ENCODE measurements at regions of chr19 and their contacts with region 1.

Region 1: GRCh38 chr19:12139885-12140547 is at the start of gene ZNF20:
- DNase-seq: peak; percentile 92 to 95 (median 94)
- ATAC-seq: peak; percentile 99
- H3K4me3 ChIP-seq: peak within 1 kb of the TSS; percentile 69
- H3K27ac ChIP-seq: peak within 1 kb of the TSS; percentile 79; the same call in 2 of the 3 replicates
- H3K4me1 ChIP-seq: peaks cover 5 to 12% of the 10 kb centered on the region in 2 experiments; a peak in 4 of 5 replicates
- H3K27me3 ChIP-seq: no peaks in the 10 kb centered on the region
- CTCF ChIP-seq: no peak
- EP300 ChIP-seq: peak; percentile 37
- POLR2A ChIP-seq: peak; percentile 65
- RAD21 ChIP-seq: no peak
- polyA plus RNA-seq, gene ZNF20: 3.3 to 3.4 TPM

Region 2: DNA sequence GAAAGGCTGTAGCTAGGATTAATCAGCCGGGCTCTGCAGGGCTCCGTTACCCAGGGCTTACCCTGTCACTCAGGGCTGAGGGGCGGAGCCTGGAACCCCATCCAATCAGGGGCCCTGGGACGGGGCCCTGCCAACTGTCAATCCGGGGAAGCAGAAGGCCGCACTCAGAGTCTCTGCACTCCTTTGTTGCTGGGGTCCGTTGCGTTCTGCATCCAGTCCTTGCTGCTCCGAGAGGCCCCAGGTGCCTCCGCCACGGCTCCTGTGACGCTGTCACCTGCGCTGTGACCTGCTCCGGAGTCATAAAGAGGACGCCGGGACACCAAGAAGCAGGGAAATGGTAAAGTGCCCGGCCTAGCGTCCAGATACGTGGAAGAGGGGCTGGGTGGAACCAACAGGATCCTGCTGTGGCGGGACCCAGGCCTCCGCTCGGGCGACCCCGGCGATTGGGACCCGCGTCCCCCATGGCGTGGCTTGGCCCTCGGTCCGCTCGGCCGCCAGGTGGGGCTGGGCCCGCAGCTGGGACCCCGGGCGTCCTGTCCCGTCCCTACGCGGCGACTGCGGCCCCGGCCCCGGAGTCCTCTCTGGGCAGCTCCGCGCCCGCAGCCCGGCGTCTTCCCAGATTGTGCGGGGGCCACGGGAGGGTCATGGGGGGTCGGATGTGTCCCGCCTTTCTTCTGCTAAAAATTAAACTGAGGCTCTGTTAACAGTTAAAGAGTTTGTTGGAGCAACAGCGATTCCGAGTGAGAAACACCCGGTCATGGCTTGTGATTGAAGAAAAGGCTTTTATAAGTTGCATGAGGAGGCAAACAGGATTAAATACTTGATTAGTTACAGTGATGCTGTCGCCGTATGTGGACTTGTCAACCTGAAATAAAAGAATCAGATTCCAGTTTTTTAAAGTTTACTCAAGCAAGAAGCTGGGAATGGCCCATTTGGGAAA is 341.4 kb before region 1 on chr19 and contains the start of gene ZNF491:
- CTCF ChIA-PET with region 1: no interaction called
- POLR2A ChIA-PET with region 1: no interaction called
- in situ Hi-C with region 1: loop called (anchors 10 kb)
- intact Hi-C with region 1: no loop called
- DNase-seq: peak; percentile 79 to 88 (median 81)
- ATAC-seq: peak; percentile 99
- H3K4me3 ChIP-seq: peak within 1 kb of the TSS; percentile 48
- H3K27ac ChIP-seq: no peak within 1 kb of the TSS
- H3K4me1 ChIP-seq: peaks cover 3 to 17% of the 10 kb centered on the region in 2 experiments; a peak in 4 of 5 replicates
- H3K27me3 ChIP-seq: no peaks in the 10 kb centered on the region
- CTCF ChIP-seq: peak in 2 of 3 experiments; percentile 12 to 29; a peak in 2 of 6 replicates
- EP300 ChIP-seq: no peak
- POLR2A ChIP-seq: no peak
- RAD21 ChIP-seq: no peak
- polyA plus RNA-seq, gene ZNF491: 0.24 TPM in 1 of 2 experiments, not detected in the other

Region 3: GRCh38 chr19:11887611-11888531 is 252.1 kb before region 1 on chr19 and contains the start of gene ZNF69:
- CTCF ChIA-PET with region 1: no interaction called
- POLR2A ChIA-PET with region 1: no interaction called
- in situ Hi-C with region 1: no loop called
- intact Hi-C with region 1: loop called (anchors 2 kb)
- DNase-seq: peak; percentile 84 to 90 (median 88)
- ATAC-seq: peak; percentile 97
- H3K4me3 ChIP-seq: peak within 1 kb of the TSS; percentile 59
- H3K27ac ChIP-seq: peak within 1 kb of the TSS; percentile 63
- H3K4me1 ChIP-seq: peaks cover 9 to 21% of the 10 kb centered on the region in 2 experiments; a peak in 4 of 5 replicates
- H3K27me3 ChIP-seq: no peaks in the 10 kb centered on the region
- CTCF ChIP-seq: peak in 2 of 3 experiments; percentile 42 to 48; a peak in 4 of 6 replicates
- EP300 ChIP-seq: no peak
- POLR2A ChIP-seq: peak; percentile 72
- RAD21 ChIP-seq: peak in 1 of 2 experiments; percentile 23; a peak in 1 of 4 replicates
- polyA plus RNA-seq, gene ZNF69: 3.5 to 4.8 TPM

Region 4: DNA sequence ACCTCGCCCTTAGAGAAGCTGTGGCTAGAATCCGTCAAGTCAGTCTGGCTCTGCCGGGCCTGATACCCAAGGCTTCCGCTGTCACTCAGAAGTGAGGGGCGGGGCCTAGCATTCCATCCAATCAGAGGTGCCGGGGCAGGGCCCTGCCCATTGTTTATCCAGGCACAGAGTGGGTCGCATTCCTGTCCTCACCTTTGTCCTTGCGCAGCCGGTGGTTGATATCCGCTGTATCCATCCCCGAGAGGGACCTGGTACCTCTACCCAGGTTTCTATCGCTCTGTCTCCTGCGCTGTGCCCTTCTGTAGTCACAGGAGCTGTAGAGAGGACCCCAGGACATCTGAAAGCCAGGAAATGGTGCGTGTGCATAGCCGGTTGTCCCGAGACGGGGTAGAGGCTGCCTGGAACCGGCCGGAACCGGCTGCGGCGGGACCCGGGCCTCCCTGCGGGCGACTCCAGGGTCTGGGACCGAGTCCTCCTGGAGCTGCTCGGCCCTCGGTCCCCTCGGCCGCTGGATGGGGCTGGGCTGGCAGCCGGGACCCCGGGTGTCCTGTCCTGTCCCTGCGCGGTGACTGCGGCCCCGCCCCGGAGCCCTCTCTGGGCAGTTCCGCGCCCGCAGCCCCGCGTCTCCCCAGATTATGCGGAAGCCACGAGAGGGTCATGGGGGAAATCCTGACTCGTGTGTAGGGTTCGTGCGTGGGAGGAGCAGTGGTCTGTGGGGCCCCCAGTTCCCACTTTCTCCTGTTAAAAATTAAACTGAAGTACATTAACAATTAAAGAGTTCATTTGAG is 175.0 kb before region 1 on chr19 and contains the start of gene ZNF763:
- CTCF ChIA-PET with region 1: no interaction called
- POLR2A ChIA-PET with region 1: interaction called, 5 read pairs
- in situ Hi-C with region 1: no loop called
- intact Hi-C with region 1: loop called (anchors 1 kb)
- DNase-seq: peak in 3 of 4 experiments; percentile 19 to 35 (median 24)
- ATAC-seq: peak; percentile 84
- H3K4me3 ChIP-seq: no peak within 1 kb of the TSS
- H3K27ac ChIP-seq: no peak within 1 kb of the TSS
- H3K4me1 ChIP-seq: peaks cover 0 to 7% of the 10 kb centered on the region in 2 experiments; a peak in 2 of 5 replicates
- H3K27me3 ChIP-seq: no peaks in the 10 kb centered on the region
- CTCF ChIP-seq: no peak
- EP300 ChIP-seq: no peak
- POLR2A ChIP-seq: no peak
- RAD21 ChIP-seq: no peak
- polyA plus RNA-seq, gene ZNF763: 0.08 TPM in 1 of 2 experiments, not detected in the other

Region 5: GRCh38 chr19:12035220-12036153 is 104.5 kb before region 1 on chr19 and contains the start of gene ZNF433:
- CTCF ChIA-PET with region 1: no interaction called
- POLR2A ChIA-PET with region 1: no interaction called
- in situ Hi-C with region 1: no loop called
- intact Hi-C with region 1: no loop called
- DNase-seq: peak; percentile 84 to 86 (median 86)
- ATAC-seq: peak; percentile 99
- H3K4me3 ChIP-seq: peak within 1 kb of the TSS; percentile 53
- H3K27ac ChIP-seq: peak within 1 kb of the TSS; percentile 72
- H3K4me1 ChIP-seq: peaks cover 0 to 8% of the 10 kb centered on the region in 2 experiments; a peak in 3 of 5 replicates
- H3K27me3 ChIP-seq: no peaks in the 10 kb centered on the region
- CTCF ChIP-seq: no peak
- EP300 ChIP-seq: no peak
- POLR2A ChIP-seq: peak; percentile 76
- RAD21 ChIP-seq: no peak
- polyA plus RNA-seq, gene ZNF433: 2.9 to 4.1 TPM

Region 6: DNA sequence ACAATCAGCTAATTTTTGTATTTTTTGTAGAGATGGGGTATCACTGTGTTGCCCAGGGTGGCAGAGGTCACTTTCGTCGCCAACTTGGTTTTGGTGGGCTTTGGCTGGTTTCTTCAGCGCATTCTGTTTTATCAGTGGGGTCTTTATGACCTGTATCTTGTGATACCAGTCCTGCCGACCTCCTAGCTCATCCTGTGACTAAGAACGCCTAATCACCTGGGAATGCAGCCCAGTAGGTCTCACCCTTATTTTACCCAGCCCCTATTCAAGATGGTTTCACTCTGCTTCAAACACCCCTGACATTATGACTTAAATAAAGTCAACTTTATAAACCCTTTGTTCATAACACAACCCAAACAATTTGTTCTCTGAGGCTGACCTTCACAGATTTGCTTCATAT is 84.2 kb before region 1 on chr19:
- CTCF ChIA-PET with region 1: interaction called, 4 read pairs
- POLR2A ChIA-PET with region 1: interaction called, 4 read pairs
- in situ Hi-C with region 1: no loop called
- intact Hi-C with region 1: loop called (anchors 2 kb)
- DNase-seq: no peak
- ATAC-seq: no peak
- H3K4me3 ChIP-seq: no peak overlapping the region
- H3K27ac ChIP-seq: no peak overlapping the region
- H3K4me1 ChIP-seq: peaks cover 0 to 13% of the 10 kb centered on the region in 2 experiments; a peak in 2 of 5 replicates
- H3K27me3 ChIP-seq: no peaks in the 10 kb centered on the region
- CTCF ChIP-seq: no peak
- EP300 ChIP-seq: no peak
- POLR2A ChIP-seq: no peak
- RAD21 ChIP-seq: no peak